ENCODE measurements at regions of chr19 and their contacts with region 1.

Region 1: GRCh38 chr19:1540365-1540925 is 16.6 kb downstream of the PLK5 start:
- DNase-seq: peak in 3 of 5 donors; percentile 25 to 56 (median 37)
- H3K4me3 ChIP-seq: no peak overlapping the region
- H3K27ac ChIP-seq: no peak overlapping the region
- H3K4me1 ChIP-seq: peaks cover 8% of the 10 kb centered on the region
- H3K27me3 ChIP-seq: no peaks in the 10 kb centered on the region
- CTCF ChIP-seq: no peak
- EP300 ChIP-seq: no peak
- POLR2A ChIP-seq: no peak

Region 2: DNA sequence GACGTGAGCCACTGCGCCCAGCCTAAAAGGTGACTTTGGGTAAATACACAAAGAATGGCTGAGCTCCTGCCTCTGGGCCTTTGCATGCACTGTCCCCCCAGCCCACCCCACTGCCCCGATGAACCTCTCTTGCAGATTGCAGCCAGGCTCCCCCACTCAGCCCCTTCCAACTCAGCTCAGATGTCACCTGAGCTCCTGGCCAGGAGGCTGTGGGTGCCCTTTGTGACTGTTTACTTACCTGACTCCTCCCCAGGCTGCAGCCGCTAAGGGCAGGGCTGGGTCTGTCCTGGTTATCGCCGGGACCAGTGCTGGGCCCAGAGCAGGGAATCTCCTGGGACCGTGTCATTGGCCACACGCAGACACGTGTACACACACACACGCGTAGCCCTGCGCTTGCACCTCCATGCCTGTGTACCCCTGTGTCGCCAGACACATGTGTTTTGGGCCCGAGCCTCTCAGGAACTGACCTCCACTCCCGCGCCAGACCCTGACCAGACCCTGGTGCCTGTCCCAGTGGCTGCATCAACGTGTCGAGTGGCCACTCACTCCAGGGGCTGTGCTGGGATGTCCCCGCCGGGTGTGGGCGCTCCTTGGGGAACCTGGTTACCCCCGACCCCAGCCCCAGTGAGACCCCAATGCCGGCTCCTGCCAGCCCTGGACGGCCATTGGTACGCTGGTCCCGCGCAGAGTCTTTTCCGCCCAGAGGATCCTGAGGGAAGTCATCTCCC is 236.1 kb before region 1 on chr19:
- intact Hi-C with region 1: no loop called
- DNase-seq: no peak
- H3K4me3 ChIP-seq: no peak overlapping the region
- H3K27ac ChIP-seq: no peak overlapping the region
- H3K4me1 ChIP-seq: no peaks in the 10 kb centered on the region
- H3K27me3 ChIP-seq: no peaks in the 10 kb centered on the region
- CTCF ChIP-seq: no peak
- EP300 ChIP-seq: no peak
- POLR2A ChIP-seq: no peak

Region 3: DNA sequence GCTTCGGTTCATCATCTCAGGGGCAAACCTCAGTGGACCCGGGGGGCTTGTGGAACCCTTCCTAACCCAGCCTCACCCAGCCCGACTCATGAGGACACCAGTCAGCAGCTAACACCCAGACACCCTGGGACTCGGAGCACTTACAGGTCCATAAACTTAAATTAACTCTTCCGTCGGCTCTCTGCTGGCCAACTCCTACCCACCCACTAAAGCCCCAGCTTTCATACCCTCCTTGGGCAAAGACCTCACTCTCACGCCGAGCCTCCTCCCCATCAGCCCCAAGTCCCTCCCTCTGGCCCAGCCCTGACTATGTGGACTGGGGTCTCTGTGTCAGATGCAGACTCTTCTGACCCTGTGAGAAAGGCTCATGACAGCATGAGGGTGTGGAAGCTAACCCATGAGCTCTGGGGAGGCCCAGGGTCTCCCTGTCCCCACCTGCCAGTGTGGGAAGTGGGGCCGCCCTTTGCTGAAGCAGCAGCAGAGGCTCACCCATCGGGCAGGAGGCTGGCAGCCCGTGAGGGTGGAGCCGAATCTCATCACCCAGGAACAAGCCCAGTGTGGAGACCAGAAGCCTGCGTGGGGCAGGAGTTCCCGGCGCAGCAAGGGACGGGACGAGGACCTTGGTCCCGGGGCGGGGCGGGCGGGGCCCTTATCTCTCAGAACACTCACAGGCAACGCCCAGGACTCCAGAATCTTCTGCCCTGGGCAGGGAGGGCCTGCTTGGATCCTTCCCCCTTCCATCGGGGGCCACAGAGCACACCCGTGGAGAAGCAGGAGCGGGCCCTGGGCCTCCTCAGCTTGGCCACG is 92.2 kb after region 1 on chr19:
- intact Hi-C with region 1: no loop called
- DNase-seq: no peak
- H3K4me3 ChIP-seq: no peak overlapping the region
- H3K27ac ChIP-seq: no peak overlapping the region
- H3K4me1 ChIP-seq: no peaks in the 10 kb centered on the region
- H3K27me3 ChIP-seq: no peaks in the 10 kb centered on the region
- CTCF ChIP-seq: no peak
- EP300 ChIP-seq: no peak
- POLR2A ChIP-seq: no peak

Region 4: DNA sequence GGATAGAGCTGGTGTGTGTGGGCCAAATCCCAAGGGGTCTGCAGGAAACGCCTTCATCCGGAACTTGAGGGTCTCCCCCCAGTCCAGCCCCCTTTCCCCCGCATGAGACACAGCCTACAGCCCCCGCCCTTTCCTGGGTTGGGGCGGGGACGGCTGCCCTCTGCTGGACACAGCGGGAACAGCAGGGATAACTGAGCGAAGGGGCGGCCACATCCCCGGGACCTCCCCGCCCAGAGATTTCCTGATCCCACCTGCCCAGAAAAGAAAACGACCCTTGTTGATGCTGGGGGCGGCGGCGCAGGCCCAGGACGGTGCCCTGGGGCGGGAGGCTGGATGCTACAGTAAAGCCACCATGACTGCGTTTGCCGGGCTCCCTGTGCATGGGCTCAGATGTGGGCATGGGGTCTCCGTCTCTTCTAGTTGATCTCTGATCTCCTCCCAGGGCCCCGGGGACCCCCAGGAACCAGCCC is 227.1 kb after region 1 on chr19:
- intact Hi-C with region 1: loop called in 1 of 4 experiments (anchors 5 kb)
- DNase-seq: peak in 3 of 5 donors; percentile 43 to 69 (median 65)
- H3K4me3 ChIP-seq: no peak overlapping the region
- H3K27ac ChIP-seq: no peak overlapping the region
- H3K4me1 ChIP-seq: no peaks in the 10 kb centered on the region
- H3K27me3 ChIP-seq: peaks cover 2% of the 10 kb centered on the region
- CTCF ChIP-seq: peak; percentile 69 to 81 (median 76)
- EP300 ChIP-seq: no peak
- POLR2A ChIP-seq: no peak

Region 5: GRCh38 chr19:1812469-1813196 is 272.2 kb after region 1 on chr19:
- intact Hi-C with region 1: loop called in 1 of 4 experiments (anchors 10 kb)
- DNase-seq: peak; percentile 90 to 94 (median 91)
- H3K4me3 ChIP-seq: peak overlapping the region; percentile 46
- H3K27ac ChIP-seq: peak overlapping the region; percentile 77 to 80
- H3K4me1 ChIP-seq: peaks cover 5% of the 10 kb centered on the region
- H3K27me3 ChIP-seq: no peaks in the 10 kb centered on the region
- CTCF ChIP-seq: peak in 1 of 3 donors; percentile 36
- EP300 ChIP-seq: no peak
- POLR2A ChIP-seq: peak; percentile 28

Region 6: GRCh38 chr19:1825909-1826556 is 285.6 kb after region 1 on chr19:
- intact Hi-C with region 1: loop called in 1 of 4 experiments (anchors 10 kb)
- DNase-seq: peak; percentile 84 to 92 (median 92)
- H3K4me3 ChIP-seq: no peak overlapping the region
- H3K27ac ChIP-seq: peak overlapping the region; percentile 68 to 89
- H3K4me1 ChIP-seq: peaks cover 8% of the 10 kb centered on the region
- H3K27me3 ChIP-seq: no peaks in the 10 kb centered on the region
- CTCF ChIP-seq: peak; percentile 91 to 95 (median 95)
- EP300 ChIP-seq: no peak
- POLR2A ChIP-seq: no peak

Region 7: DNA sequence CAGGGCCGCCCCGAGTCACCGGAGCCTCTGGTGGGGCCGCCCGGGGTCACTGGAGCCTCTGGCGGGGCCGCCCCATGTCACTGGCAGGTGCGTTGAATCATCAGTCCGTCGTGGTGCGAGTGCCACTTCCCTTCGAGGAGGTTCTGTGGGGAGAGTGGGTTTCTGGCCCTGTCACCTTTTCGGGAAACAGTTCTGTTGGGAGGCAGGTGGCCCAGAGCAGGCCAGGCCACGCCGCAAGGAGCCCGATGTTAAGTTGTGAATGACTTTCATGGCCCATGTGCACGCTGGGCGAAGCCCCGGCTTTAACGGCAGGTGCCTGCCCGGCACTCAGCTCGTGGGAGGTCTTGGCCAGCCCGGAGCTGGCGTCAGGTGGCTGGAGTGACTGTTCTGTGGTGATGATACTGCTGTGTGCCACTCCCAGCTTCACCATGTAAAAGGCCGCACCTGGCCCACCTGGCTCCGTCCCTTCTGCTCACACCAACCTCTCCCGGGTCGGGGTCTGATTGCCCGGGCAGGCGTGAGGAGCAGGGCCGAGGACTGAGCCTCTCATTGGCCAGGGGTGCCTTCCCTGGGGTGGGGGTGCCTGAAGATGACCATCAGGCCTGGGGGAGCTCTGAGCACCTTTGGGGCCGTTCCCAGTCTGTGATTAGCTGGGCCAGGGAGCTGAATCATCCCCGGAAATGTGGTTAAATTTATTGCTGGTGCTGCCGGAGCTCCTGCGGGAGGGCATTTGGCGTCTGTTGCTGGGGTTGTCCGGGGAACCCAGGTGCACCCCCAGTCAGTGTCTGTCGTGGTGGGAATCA is 429.8 kb after region 1 on chr19:
- intact Hi-C with region 1: no loop called
- DNase-seq: no peak
- H3K4me3 ChIP-seq: no peak overlapping the region
- H3K27ac ChIP-seq: no peak overlapping the region
- H3K4me1 ChIP-seq: no peaks in the 10 kb centered on the region
- H3K27me3 ChIP-seq: no peaks in the 10 kb centered on the region
- CTCF ChIP-seq: no peak
- EP300 ChIP-seq: no peak
- POLR2A ChIP-seq: no peak